PC-9 (cell line): ENCODE measurements at regions of chr4 and their contacts with region 1.

Region 1: DNA sequence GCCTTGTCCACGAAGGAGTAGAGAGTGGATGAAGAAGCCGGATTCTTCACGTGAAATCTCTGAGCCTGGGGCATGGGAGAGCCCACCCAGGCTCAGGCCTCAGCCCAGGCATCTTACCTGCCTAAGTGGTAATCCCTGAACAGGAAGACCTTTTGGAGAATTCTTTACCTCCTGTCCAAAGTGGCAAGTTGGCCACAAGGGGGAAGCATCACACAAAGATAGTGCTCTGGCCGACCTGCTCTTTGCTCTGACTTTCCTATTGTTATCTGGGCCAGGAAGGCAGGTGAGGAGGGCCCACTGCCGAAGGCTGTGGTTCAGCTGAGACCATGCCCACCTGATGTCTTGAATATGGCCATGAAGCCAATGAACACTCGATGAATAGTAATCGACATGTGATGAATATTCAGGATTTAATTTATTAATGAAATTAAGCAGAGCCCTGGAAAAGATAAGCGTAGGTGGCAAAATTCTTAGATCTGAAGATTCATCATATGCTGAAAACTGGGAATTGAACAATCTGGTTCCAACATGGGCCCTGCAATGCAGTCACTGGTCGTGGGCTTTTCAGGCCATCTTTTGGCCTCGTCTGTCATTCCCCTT is 93.8 kb downstream of the PDGFRA start:
- DNase-seq: peak in 1 of 2 experiments; percentile 31
- H3K4me3 ChIP-seq: no peak overlapping the region
- H3K27ac ChIP-seq: no peak overlapping the region
- H3K4me1 ChIP-seq: no peaks in the 10 kb centered on the region
- H3K27me3 ChIP-seq: no peaks in the 10 kb centered on the region
- CTCF ChIP-seq: peak; percentile 73

Region 2: GRCh38 chr4:53920116-53920515 is 402.8 kb before region 1 on chr4:
- CTCF ChIA-PET with region 1: no interaction called
- POLR2A ChIA-PET with region 1: no interaction called
- intact Hi-C with region 1: no loop called
- DNase-seq: no peak
- H3K4me3 ChIP-seq: no peak overlapping the region
- H3K27ac ChIP-seq: no peak overlapping the region
- H3K4me1 ChIP-seq: peaks cover 31% of the 10 kb centered on the region
- H3K27me3 ChIP-seq: no peaks in the 10 kb centered on the region
- CTCF ChIP-seq: no peak

Region 3: GRCh38 chr4:54440394-54441136 is 117.6 kb after region 1 on chr4:
- CTCF ChIA-PET with region 1: no interaction called
- POLR2A ChIA-PET with region 1: no interaction called
- intact Hi-C with region 1: loop called (anchors 2 kb)
- DNase-seq: no peak
- H3K4me3 ChIP-seq: no peak overlapping the region
- H3K27ac ChIP-seq: no peak overlapping the region
- H3K4me1 ChIP-seq: no peaks in the 10 kb centered on the region
- H3K27me3 ChIP-seq: no peaks in the 10 kb centered on the region
- CTCF ChIP-seq: peak; percentile 59

Region 4: DNA sequence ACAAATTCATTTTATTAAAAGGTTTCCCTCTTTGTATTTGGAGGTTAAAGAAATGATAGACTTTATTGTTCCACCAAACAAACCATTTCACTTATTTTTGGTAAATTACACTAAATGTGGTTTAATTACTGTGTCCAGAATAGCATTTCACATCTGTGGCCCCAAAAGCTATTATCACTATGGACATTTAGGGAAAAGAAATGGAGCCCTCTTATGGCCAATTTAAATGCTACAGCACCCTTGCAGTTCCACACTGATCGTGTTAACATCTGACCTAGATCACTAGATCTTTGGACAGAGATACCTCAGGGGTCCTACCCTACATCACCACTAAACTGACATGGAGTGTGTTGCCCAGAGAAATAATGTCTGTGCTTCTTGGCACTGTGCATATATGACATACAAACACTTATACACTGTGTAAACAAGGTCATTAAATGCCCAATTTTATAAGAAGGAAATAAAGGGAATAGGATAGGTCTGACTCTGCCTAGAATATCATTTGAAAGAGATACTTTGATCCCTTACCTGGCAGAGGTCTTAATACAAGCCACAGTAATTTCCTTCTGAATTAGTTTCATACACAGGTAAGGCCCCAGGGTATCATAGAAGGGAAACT is 638.5 kb after region 1 on chr4:
- CTCF ChIA-PET with region 1: no interaction called
- POLR2A ChIA-PET with region 1: no interaction called
- intact Hi-C with region 1: loop called (anchors 5 kb)
- DNase-seq: no peak
- H3K4me3 ChIP-seq: no peak overlapping the region
- H3K27ac ChIP-seq: no peak overlapping the region
- H3K4me1 ChIP-seq: no peaks in the 10 kb centered on the region
- H3K27me3 ChIP-seq: no peaks in the 10 kb centered on the region
- CTCF ChIP-seq: peak; percentile 62

Region 5: GRCh38 chr4:55321707-55322264 is 998.9 kb after region 1 on chr4:
- CTCF ChIA-PET with region 1: no interaction called
- POLR2A ChIA-PET with region 1: no interaction called
- intact Hi-C with region 1: loop called (anchors 10 kb)
- DNase-seq: peak; percentile 55 to 60
- H3K4me3 ChIP-seq: no peak overlapping the region
- H3K27ac ChIP-seq: no peak overlapping the region
- H3K4me1 ChIP-seq: peaks cover 7% of the 10 kb centered on the region
- H3K27me3 ChIP-seq: no peaks in the 10 kb centered on the region
- CTCF ChIP-seq: peak; percentile 77